Activated CD4-positive, alpha-beta memory T cell treated with anti-CD3 and anti-CD28 coated beads, Interleukin-2, amount 10 ng/mL, durations not matched to agents 7 days and 5 days (primary cell): ENCODE measurements at regions of chr14 and their contacts with region 1.

Region 1: GRCh38 chr14:34982417-34983147 is at the start of gene SRP54:
- DNase-seq: peak; percentile 100
- H3K4me3 Mint-ChIP-seq: no peak within 1 kb of the TSS
- H3K27ac Mint-ChIP-seq: no peak within 1 kb of the TSS
- H3K4me1 Mint-ChIP-seq: peaks cover 17% of the 10 kb centered on the region
- H3K27me3 Mint-ChIP-seq: no peaks in the 10 kb centered on the region
- total RNA-seq, gene SRP54: 69.4 to 71.2 TPM

Region 2: DNA sequence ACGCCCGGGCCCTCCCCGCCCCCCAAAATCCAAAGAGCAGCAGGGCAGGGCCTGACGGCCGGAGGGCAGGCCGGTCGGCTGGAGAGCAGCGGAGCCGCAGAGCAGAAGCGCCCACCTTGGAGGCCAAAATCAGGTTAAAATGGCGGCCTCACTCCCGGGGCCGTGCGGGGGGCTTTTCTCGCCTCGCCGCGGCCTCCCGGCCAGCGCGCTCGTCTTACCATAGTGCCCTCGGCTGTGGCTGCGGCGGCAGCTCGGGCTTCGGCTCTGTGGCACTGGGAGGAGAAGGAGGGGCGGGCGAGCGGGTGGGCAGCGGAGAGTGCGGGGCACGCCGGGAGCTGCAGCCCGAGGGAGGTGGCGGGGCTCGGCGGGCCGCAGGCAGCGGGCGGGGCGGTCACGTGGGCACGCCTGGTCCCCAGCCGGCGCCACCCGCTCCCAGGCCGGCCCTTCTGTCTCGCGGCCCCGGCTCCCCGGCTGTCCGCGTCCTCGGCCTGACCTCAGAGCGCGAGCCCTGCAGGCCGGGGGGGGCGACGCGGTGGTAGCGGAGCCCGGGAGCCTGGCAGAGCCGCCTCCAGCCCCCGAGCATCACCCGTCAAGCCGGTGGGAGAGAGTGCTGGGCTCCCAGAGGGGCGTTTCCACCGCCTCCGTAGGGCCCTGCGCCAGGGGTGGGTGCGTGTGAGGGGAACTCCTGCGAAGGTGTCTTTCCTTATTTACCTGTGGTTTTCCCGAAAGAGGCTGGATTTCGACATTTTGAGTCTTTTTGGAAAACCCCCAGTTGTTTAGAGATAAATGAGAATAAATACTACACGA is 268.1 kb before region 1 on chr14 and contains the start of gene CFL2:
- CTCF ChIA-PET with region 1: no interaction called
- POLR2A ChIA-PET with region 1: interaction called, 17 read pairs
- DNase-seq: peak; percentile 70
- H3K4me3 Mint-ChIP-seq: peak within 1 kb of the TSS; percentile 87
- H3K27ac Mint-ChIP-seq: peak within 1 kb of the TSS; percentile 73
- H3K4me1 Mint-ChIP-seq: peaks cover 33% of the 10 kb centered on the region
- H3K27me3 Mint-ChIP-seq: peaks cover 4% of the 10 kb centered on the region
- total RNA-seq, gene CFL2: 7.7 to 9.0 TPM

Region 3: GRCh38 chr14:34931206-34931605 is 51.4 kb before region 1 on chr14:
- CTCF ChIA-PET with region 1: interaction called, 7 read pairs
- POLR2A ChIA-PET with region 1: interaction called, 34 read pairs
- DNase-seq: peak; percentile 27
- H3K4me3 Mint-ChIP-seq: peak overlapping the region; percentile 4
- H3K27ac Mint-ChIP-seq: peak overlapping the region; percentile 91
- H3K4me1 Mint-ChIP-seq: peaks cover 32% of the 10 kb centered on the region
- H3K27me3 Mint-ChIP-seq: no peaks in the 10 kb centered on the region

Region 4: GRCh38 chr14:35046048-35046741 is 63.6 kb after region 1 on chr14 and contains the start of gene FAM177A1:
- CTCF ChIA-PET with region 1: interaction called, 20 read pairs
- POLR2A ChIA-PET with region 1: interaction called, 97 read pairs
- DNase-seq: peak; percentile 99
- H3K4me3 Mint-ChIP-seq: peak within 1 kb of the TSS; percentile 83
- H3K27ac Mint-ChIP-seq: peak within 1 kb of the TSS; percentile 96
- H3K4me1 Mint-ChIP-seq: peaks cover 37% of the 10 kb centered on the region
- H3K27me3 Mint-ChIP-seq: no peaks in the 10 kb centered on the region
- total RNA-seq, gene FAM177A1: 51.4 to 51.5 TPM

Region 5: GRCh38 chr14:35292051-35292769 is 309.6 kb after region 1 on chr14 and contains the start of gene PSMA6:
- CTCF ChIA-PET with region 1: no interaction called
- POLR2A ChIA-PET with region 1: interaction called, 14 read pairs
- DNase-seq: peak; percentile 100
- H3K4me3 Mint-ChIP-seq: peak within 1 kb of the TSS; percentile 96
- H3K27ac Mint-ChIP-seq: peak within 1 kb of the TSS; percentile 92
- H3K4me1 Mint-ChIP-seq: peaks cover 42% of the 10 kb centered on the region
- H3K27me3 Mint-ChIP-seq: no peaks in the 10 kb centered on the region
- total RNA-seq, gene PSMA6: 235 to 242 TPM